PC-9 (cell line): ENCODE measurements at regions of chr6 and their contacts with region 1.

Region 1: DNA sequence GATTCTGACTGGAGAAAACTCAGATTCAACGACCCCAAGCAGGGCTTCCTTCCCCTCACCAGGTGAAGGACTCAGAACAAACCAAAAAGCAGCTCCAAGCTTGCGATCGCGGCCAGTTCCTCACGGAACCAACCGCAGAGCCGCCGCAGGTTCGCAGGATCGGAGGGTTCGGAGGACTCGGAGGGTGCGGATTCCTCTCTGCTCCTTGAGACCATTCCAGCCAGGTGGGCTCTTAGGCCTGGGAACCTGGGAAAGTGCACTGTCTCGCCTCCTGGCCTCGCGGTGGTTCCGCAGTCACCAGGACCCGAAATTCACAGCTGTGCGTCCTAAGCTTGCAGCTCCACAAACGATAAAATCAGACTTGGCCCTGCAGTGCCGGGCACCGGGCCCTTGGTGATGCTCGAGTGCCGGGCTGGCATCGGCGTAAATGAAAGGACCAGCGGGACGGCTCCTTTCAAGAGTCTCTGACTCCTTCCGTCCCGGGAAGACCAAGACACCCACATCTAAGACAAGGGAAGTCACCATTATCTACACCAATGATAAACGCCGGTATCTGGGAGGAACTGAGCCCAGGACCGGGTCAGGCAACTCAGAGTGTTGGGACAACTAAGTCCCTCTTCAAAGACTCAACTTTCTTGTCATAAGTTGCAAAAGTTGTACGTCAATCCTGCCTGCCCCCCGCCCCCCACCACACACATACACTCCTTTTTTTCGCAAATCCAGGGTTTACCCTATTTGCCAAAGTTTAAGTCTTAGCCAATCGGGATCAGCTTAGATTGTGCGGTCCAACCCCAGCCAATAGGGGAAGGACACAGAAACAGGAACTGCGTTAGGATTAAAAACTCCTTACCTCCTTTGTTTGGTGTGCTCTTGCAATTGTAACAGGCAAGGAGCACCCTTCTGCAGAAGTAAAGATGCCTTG is 69.8 kb upstream of the PRSS16 start:
- DNase-seq: peak; percentile 80 to 88
- H3K4me3 ChIP-seq: peak overlapping the region; percentile 97
- H3K27ac ChIP-seq: peak overlapping the region; percentile 67
- H3K4me1 ChIP-seq: no peaks in the 10 kb centered on the region; the same call in 1 of the 2 replicates
- H3K27me3 ChIP-seq: no peaks in the 10 kb centered on the region
- CTCF ChIP-seq: peak; percentile 67

Region 2: GRCh38 chr6:27406092-27406491 is 228.3 kb after region 1 on chr6:
- CTCF ChIA-PET with region 1: no interaction called
- POLR2A ChIA-PET with region 1: no interaction called
- intact Hi-C with region 1: no loop called
- DNase-seq: peak in 1 of 2 experiments; percentile 21
- H3K4me3 ChIP-seq: no peak overlapping the region
- H3K27ac ChIP-seq: no peak overlapping the region
- H3K4me1 ChIP-seq: no peaks in the 10 kb centered on the region
- H3K27me3 ChIP-seq: no peaks in the 10 kb centered on the region
- CTCF ChIP-seq: no peak

Region 3: GRCh38 chr6:27772261-27773001 is 594.7 kb after region 1 on chr6:
- CTCF ChIA-PET with region 1: no interaction called
- POLR2A ChIA-PET with region 1: interaction called, 24 read pairs
- intact Hi-C with region 1: no loop called
- DNase-seq: peak in 1 of 2 experiments; percentile 84
- H3K4me3 ChIP-seq: no peak overlapping the region
- H3K27ac ChIP-seq: no peak overlapping the region
- H3K4me1 ChIP-seq: no peaks in the 10 kb centered on the region
- H3K27me3 ChIP-seq: no peaks in the 10 kb centered on the region
- CTCF ChIP-seq: peak; percentile 80

Region 4: DNA sequence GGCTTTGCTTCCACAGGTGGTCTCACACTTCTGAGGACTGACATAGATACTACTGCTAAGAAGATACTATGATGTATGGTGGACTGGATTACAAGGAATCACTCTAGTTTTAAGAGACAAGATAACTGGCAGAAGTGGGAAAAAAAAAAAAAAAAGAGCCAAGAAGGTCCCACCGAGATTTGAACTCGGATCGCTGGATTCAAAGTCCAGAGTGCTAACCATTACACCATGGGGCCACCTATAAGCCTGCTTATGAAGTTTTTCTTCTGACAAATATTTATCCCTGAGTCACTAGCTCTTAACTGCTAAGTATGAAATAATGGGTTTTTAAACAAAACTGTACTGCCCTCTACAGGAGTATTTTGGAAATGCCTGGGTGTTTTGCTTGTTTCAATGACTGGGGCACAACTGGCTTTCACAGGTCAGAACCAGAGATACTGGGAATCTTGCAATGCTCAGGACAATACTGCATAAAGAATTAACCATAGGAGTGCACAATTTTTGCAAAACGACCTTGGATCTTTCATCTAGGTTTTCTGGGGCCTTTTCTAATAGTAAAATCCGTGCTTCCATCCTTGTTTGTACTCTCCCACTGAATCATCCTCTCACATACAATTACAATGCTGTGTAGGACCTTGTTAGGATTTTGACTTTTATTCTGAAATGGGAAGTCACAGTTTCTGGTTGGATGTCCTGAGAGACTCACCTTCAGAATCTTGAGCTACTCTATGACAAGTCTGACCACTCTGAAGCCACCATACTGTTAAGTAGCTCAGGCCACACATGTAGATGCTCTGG is 618.1 kb after region 1 on chr6:
- CTCF ChIA-PET with region 1: interaction called, 19 read pairs
- POLR2A ChIA-PET with region 1: no interaction called
- intact Hi-C with region 1: no loop called
- DNase-seq: peak; percentile 70 to 87
- H3K4me3 ChIP-seq: no peak overlapping the region; the same call in 1 of the 2 replicates
- H3K27ac ChIP-seq: no peak overlapping the region
- H3K4me1 ChIP-seq: peaks cover 7% of the 10 kb centered on the region; the same call in 1 of the 2 replicates
- H3K27me3 ChIP-seq: no peaks in the 10 kb centered on the region
- CTCF ChIP-seq: peak; percentile 89